HCT116 (cell line): ENCODE measurements at regions of chr9 and their contacts with region 1.

Region 1: GRCh38 chr9:34332076-34332964 is 3.0 kb downstream of the NUDT2 start:
- DNase-seq: peak; percentile 28
- ATAC-seq: no peak
- H3K4me3 ChIP-seq: no peak overlapping the region
- H3K27ac ChIP-seq: no peak overlapping the region
- H3K4me1 ChIP-seq: peaks cover 8 to 23% of the 10 kb centered on the region in 2 experiments; a peak in 3 of 4 replicates
- H3K27me3 ChIP-seq: no peaks in the 10 kb centered on the region
- CTCF ChIP-seq: peak; percentile 40 to 71 (median 58)
- POLR2A ChIP-seq: no peak
- RAD21 ChIP-seq: peak; percentile 81

Region 2: GRCh38 chr9:34603610-34604231 is 271.4 kb after region 1 on chr9:
- CTCF ChIA-PET with region 1: interaction called, 7 read pairs
- POLR2A ChIA-PET with region 1: interaction called, 3 read pairs
- RAD21 ChIA-PET with region 1: no interaction called
- intact Hi-C with region 1: loop called (anchors 2 kb)
- DNase-seq: peak; percentile 42
- ATAC-seq: peak; percentile 98
- H3K4me3 ChIP-seq: no peak overlapping the region
- H3K27ac ChIP-seq: no peak overlapping the region
- H3K4me1 ChIP-seq: peaks cover 0 to 10% of the 10 kb centered on the region in 2 experiments; a peak in 1 of 4 replicates
- H3K27me3 ChIP-seq: no peaks in the 10 kb centered on the region
- CTCF ChIP-seq: peak; percentile 84 to 99 (median 91); a peak in 5 of 6 replicates
- POLR2A ChIP-seq: no peak
- RAD21 ChIP-seq: peak; percentile 94

Region 3: DNA sequence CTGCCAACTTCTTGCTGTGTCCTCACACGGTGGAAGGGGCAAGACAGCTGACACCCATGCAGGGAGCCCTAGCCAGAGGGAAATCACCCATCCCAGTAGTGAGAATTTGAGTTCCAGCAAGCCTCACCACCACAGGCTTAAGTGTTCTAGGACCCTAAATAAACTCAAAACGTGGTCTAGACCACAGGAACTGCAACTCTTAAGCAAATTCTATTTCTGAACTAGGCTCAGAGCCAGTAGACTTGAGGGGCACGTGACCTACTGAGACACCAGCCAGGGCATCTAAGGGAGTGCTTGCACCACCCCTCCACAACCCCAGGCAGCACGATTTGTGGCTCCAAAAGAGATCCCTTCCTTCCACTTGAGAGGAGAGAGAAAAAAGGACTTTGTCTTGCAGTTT is 529.7 kb after region 1 on chr9:
- CTCF ChIA-PET with region 1: no interaction called
- POLR2A ChIA-PET with region 1: no interaction called
- RAD21 ChIA-PET with region 1: no interaction called
- intact Hi-C with region 1: no loop called
- DNase-seq: no peak
- ATAC-seq: no peak
- H3K4me3 ChIP-seq: no peak overlapping the region
- H3K27ac ChIP-seq: no peak overlapping the region
- H3K4me1 ChIP-seq: no peaks in the 10 kb centered on the region
- H3K27me3 ChIP-seq: peaks cover 3% of the 10 kb centered on the region; the same call in 1 of the 2 replicates
- CTCF ChIP-seq: no peak
- POLR2A ChIP-seq: no peak
- RAD21 ChIP-seq: no peak